H1 (cell line): ENCODE measurements at regions of chr11 and their contacts with region 1.

Region 1: DNA sequence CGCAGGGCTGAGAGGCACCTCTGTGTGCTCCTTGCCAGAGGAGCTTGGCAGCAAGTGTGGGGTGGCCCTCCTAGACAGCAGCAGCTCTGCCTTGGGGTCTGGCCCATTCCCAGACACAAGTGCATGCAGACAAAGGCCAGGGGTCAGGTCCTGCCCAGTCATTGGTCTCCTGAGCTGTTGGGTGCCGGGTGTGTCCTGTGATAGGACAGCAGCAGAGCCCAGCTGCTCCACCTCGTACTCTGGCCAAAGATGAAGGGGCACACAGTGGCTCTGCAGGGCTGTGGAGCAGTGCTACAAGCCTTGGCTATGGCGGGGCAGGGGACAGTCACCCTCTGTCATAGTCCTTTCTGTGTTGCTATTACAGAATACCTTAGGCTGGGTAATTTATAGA is 17.3 kb upstream of the OSBPL5 start:
- DNase-seq: no peak
- H3K4me3 ChIP-seq: no peak overlapping the region
- H3K27ac ChIP-seq: no peak overlapping the region
- H3K4me1 ChIP-seq: no peaks in the 10 kb centered on the region; a peak in 1 of 7 replicates
- H3K27me3 ChIP-seq: no peaks in the 10 kb centered on the region
- CTCF ChIP-seq: no peak
- EP300 ChIP-seq: no peak
- POLR2A ChIP-seq: no peak
- RAD21 ChIP-seq: no peak

Region 2: DNA sequence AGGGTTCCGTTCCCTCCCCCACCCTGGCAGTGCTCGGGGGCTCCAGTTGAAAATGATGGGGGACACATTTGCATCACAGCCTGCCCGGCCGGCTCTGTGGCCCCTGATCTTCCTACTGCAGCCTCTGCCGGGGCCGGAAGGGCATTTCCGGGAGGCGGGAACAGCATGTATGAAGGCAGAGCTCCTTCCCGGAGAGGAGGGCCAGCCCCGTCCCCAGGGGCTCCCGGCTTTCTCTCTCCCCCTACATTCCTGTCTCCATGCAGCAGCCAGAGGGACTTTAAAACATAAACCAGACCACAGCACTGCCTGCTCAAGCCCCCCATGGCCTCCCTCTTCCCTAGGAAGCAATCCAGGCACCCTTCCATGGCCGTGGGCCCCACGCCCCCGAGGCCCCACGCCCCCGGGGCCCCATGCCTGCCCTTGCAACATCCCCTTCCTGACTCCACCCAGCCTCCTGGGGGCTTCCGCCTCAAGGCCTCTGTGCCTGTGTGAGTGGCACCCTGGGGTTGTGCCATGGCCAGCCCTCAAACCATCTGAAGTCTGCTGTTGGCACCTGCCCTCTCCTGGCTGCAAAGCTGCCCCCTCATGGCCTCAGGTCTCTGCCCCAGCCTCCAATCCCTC is 370.0 kb before region 1 on chr11:
- CTCF ChIA-PET with region 1: no interaction called
- POLR2A ChIA-PET with region 1: no interaction called
- DNase-seq: no peak
- H3K4me3 ChIP-seq: no peak overlapping the region
- H3K27ac ChIP-seq: no peak overlapping the region
- H3K4me1 ChIP-seq: peaks cover 0 to 12% (median 5%) of the 10 kb centered on the region in 4 experiments; a peak in 5 of 7 replicates
- H3K27me3 ChIP-seq: peaks cover 0 to 36% (median 15%) of the 10 kb centered on the region in 4 experiments; a peak in 6 of 7 replicates
- CTCF ChIP-seq: no peak
- EP300 ChIP-seq: no peak
- POLR2A ChIP-seq: no peak
- RAD21 ChIP-seq: no peak

Region 3: GRCh38 chr11:3021125-3021524 is 161.3 kb before region 1 on chr11:
- CTCF ChIA-PET with region 1: no interaction called
- POLR2A ChIA-PET with region 1: no interaction called
- DNase-seq: no peak
- H3K4me3 ChIP-seq: no peak overlapping the region
- H3K27ac ChIP-seq: no peak overlapping the region
- H3K4me1 ChIP-seq: no peaks in the 10 kb centered on the region
- H3K27me3 ChIP-seq: no peaks in the 10 kb centered on the region
- CTCF ChIP-seq: peak; percentile 57 to 82 (median 78)
- EP300 ChIP-seq: no peak
- POLR2A ChIP-seq: no peak; a peak in 1 of 3 replicates
- RAD21 ChIP-seq: peak; percentile 72 to 79

Region 4: DNA sequence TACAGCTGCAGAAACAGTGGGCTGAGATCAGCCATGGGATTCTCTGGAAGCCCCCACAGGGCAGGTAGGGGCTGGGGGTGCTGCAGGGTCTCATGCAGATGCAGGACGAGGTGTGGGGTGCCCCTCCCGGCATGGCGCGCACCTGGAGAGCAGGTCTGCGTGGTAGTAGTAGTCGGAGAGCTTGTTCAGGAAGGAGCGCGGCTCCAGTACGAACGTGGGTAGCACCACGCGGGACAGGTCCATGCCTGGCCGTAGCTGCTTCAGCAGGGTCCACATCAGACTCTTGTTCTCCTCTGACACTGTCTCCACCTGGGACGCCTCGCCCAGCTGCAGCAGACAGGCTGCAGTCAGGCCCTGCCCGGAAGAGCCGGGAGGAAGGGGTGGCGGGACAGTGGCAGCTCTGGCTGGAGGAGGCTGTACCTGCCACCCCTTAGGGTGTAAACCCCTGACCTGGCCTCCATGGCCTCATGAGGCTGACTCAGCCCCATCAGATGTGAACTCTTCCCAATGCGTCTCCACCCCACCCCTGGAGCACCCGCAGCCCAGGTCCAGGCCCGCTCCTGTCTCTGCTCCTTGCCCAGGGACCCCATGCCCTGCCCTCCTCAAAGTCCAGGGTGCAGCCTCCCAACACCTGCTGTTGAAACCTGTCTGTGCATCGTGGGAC is 78.3 kb before region 1 on chr11:
- CTCF ChIA-PET with region 1: no interaction called
- POLR2A ChIA-PET with region 1: no interaction called
- DNase-seq: no peak
- H3K4me3 ChIP-seq: no peak overlapping the region
- H3K27ac ChIP-seq: no peak overlapping the region
- H3K4me1 ChIP-seq: peaks cover 0 to 10% (median 3%) of the 10 kb centered on the region in 4 experiments; a peak in 5 of 7 replicates
- H3K27me3 ChIP-seq: no peaks in the 10 kb centered on the region; a peak in 2 of 7 replicates
- CTCF ChIP-seq: no peak
- EP300 ChIP-seq: no peak
- POLR2A ChIP-seq: no peak
- RAD21 ChIP-seq: no peak

Region 5: DNA sequence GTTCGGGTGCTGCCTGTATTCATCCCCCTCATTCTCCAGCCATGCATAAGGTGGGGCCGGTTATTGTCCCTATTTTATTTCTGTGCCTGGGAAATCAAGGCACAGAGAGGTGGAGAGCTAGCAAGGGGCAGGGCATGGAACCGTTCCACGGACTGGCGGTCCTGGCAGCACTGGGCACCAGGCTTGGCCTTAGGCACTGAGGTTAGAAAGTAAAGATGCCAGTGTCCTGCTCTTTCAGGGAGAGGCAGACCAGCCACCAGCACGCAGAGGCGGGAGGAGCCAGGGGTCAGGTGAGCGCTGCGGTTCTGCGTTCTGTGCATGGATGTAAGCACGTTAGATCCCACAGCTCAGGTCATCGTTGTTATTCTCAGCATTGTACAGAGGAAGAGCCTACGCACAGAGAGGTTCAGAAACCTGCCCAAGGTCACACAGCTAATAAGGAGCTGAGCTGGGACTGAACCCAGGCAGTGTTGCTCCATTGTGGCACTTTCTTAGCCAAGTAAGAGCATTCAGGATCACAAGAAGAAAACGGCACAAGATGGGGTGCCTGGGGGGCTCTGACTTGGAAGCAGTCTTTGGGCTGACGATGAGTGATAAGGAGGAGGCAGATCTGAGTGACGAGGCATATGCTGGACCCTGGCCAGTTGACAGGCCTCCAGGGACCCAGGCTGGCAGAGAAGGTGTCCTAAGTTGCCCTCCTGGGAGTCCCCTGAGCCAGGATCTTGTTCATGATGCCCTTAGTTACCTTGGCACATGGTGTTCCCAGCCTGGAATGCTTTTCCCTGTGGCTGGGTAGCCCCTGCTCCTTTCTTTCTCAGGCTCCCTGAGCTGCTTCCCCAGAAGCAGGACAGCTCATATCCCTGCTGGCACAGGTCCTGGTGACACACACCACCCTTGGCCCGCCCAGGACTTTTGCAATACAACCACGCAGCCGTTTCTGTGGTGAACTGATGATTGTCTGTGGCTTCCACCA is 58.4 kb before region 1 on chr11:
- CTCF ChIA-PET with region 1: no interaction called
- POLR2A ChIA-PET with region 1: no interaction called
- DNase-seq: no peak
- H3K4me3 ChIP-seq: no peak overlapping the region
- H3K27ac ChIP-seq: no peak overlapping the region; the same call in 1 of the 2 replicates
- H3K4me1 ChIP-seq: no peaks in the 10 kb centered on the region; a peak in 1 of 7 replicates
- H3K27me3 ChIP-seq: no peaks in the 10 kb centered on the region
- CTCF ChIP-seq: no peak
- EP300 ChIP-seq: no peak
- POLR2A ChIP-seq: no peak
- RAD21 ChIP-seq: no peak

Region 6: DNA sequence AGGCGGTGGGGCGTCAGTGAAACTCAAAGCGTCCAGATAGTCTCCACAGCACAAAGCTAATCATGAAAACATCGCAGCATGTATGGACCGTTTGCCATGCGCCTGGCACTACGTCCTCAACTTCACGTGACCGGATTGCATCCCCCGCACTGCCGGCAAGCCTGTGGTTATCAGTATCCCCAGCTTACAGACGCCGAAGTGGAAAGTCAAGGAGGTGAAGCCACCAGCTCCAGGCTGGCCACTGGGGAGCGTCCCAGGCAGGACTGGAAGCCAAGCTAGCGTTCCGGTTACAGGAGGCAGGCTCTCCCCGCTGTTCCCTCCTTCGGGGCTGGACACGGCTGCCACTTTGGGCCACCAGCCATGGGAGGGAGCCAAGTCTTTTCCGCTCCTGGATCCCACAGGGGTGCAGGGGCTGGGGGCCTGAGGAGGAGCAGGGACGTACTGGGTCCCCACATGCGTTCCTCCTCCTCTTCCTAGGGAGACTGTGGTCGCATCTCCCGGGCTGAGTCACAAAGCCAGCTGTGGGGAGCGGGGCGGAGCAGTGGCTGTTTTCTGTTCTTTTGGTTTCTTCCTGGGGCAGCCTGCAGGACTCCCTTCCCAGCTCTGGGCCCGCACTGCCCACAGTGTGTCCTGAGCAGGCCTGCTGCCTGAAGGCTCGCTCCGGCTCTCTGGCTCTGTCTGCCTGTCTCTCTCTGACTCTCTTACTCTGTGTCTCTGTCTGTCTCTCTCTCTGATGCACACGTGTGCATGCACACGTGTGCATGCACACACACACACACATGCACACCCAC is 13.0 kb before region 1 on chr11:
- CTCF ChIA-PET with region 1: interaction called, 14 read pairs
- POLR2A ChIA-PET with region 1: interaction called, 3 read pairs
- DNase-seq: no peak
- H3K4me3 ChIP-seq: peak overlapping the region in 2 of 4 experiments; percentile 12 to 36; a peak in 2 of 8 replicates
- H3K27ac ChIP-seq: no peak overlapping the region
- H3K4me1 ChIP-seq: peaks cover 0 to 16% (median 5%) of the 10 kb centered on the region in 4 experiments; a peak in 6 of 7 replicates
- H3K27me3 ChIP-seq: peaks cover 0 to 25% (median 14%) of the 10 kb centered on the region in 4 experiments; a peak in 6 of 7 replicates
- CTCF ChIP-seq: peak in 2 of 3 experiments; percentile 30 to 31; a peak in 3 of 4 replicates
- EP300 ChIP-seq: no peak
- POLR2A ChIP-seq: no peak
- RAD21 ChIP-seq: peak; percentile 28 to 36; a peak in 3 of 4 replicates